ENCODE measurements at regions of chr16 and their contacts with region 1.

Region 1: DNA sequence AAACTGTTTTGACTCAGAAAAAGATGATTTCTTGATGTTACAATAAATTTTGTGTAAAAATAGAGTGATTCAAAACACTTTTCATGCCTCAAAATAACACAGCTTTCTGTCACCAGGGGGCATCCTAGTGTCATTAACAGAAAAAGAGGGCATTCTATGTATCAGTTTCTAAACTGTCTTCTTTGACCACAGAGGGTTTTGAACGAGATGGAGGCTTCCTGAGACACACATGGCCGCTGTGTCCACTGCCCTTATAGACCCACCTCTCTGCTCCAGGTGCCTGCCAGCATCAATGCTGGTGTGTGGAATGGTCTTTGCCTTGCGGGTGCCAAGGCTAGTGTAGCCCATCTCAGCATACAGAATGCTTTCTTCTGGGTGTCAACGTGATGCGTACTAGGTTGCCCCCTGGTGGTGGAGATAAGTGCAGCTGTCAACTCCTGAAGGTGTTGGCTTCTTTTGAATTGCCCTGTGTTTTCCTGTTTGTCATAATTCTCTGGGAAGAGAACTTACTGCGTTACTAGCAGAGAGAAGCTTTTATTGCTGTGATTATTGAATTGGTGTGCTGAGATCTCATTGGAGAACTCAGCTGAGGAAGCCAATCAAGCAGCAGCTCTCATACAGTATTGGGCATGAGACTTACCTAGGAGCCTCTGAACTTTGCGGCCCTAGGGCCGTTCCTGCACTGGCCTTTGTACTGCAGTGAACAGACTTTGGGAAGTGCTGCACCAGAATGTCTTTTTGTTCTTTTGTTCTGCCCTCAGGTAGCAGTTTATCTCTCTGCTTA is 38.6 kb downstream of the USP10 start:
- DNase-seq: peak; percentile 72

Region 2: DNA sequence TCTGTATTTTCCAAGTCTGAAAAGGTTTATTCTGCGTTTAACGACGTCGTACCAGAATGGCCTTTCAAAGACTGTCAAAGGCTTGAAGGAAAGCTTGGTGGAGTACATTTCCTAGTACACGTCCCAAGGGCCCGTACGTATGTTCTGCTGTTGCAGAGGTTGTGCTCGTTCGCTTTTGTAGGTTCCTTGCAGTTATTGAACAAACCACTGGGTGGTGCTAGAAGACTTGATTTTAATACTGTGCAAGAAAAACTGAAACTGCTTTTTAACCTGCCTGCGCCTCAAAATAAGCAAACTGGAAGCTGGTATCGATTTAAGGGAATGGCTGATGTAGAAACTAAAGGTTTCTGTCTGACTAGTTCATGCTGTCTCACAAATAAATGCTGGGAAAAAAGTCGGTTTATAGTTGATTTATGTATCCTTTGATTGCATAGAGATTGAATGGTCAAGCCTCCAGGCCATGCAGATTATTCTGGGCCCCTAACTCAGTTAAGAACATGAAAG is 16.0 kb after region 1 on chr16:
- CTCF ChIA-PET with region 1: interaction called, 15 read pairs
- POLR2A ChIA-PET with region 1: no interaction called
- DNase-seq: peak; percentile 76